GM12878 (cell line): ENCODE measurements at regions of chr14 and their contacts with region 1.

Region 1: GRCh38 chr14:63867933-63868921 is 15.4 kb downstream of the SYNE2 start:
- DNase-seq: peak; percentile 56
- ATAC-seq: peak; percentile 5
- H3K4me3 ChIP-seq: peak overlapping the region; percentile 34; the same call in 1 of the 2 replicates
- H3K27ac ChIP-seq: peak overlapping the region; percentile 69
- H3K4me1 ChIP-seq: peaks cover 57% of the 10 kb centered on the region
- H3K27me3 ChIP-seq: no peaks in the 10 kb centered on the region
- CTCF ChIP-seq: no peak
- EP300 ChIP-seq: no peak
- POLR2A ChIP-seq: no peak
- RAD21 ChIP-seq: no peak

Region 2: GRCh38 chr14:63910583-63911363 is 42.5 kb after region 1 on chr14:
- CTCF ChIA-PET with region 1: interaction called, 6 read pairs
- POLR2A ChIA-PET with region 1: interaction called, 17 read pairs
- RAD21 ChIA-PET with region 1: interaction called, 7 read pairs
- SMC1A ChIA-PET with region 1: interaction called, 26 read pairs
- in situ Hi-C with region 1: no loop called
- intact Hi-C with region 1: no loop called
- DNase-seq: no peak
- ATAC-seq: peak; percentile 53
- H3K4me3 ChIP-seq: no peak overlapping the region
- H3K27ac ChIP-seq: peak overlapping the region; percentile 56
- H3K4me1 ChIP-seq: peaks cover 17% of the 10 kb centered on the region
- H3K27me3 ChIP-seq: no peaks in the 10 kb centered on the region
- CTCF ChIP-seq: no peak
- EP300 ChIP-seq: no peak
- POLR2A ChIP-seq: no peak
- RAD21 ChIP-seq: no peak

Region 3: GRCh38 chr14:63938198-63939005 is 70.2 kb after region 1 on chr14:
- CTCF ChIA-PET with region 1: no interaction called
- POLR2A ChIA-PET with region 1: interaction called, 7 read pairs
- RAD21 ChIA-PET with region 1: interaction called, 7 read pairs
- SMC1A ChIA-PET with region 1: interaction called, 8 read pairs
- in situ Hi-C with region 1: no loop called
- intact Hi-C with region 1: loop called (anchors 2 kb)
- DNase-seq: peak; percentile 56
- ATAC-seq: peak; percentile 84
- H3K4me3 ChIP-seq: no peak overlapping the region
- H3K27ac ChIP-seq: peak overlapping the region; percentile 76
- H3K4me1 ChIP-seq: peaks cover 42% of the 10 kb centered on the region
- H3K27me3 ChIP-seq: no peaks in the 10 kb centered on the region
- CTCF ChIP-seq: no peak
- EP300 ChIP-seq: no peak
- POLR2A ChIP-seq: no peak
- RAD21 ChIP-seq: no peak

Region 4: DNA sequence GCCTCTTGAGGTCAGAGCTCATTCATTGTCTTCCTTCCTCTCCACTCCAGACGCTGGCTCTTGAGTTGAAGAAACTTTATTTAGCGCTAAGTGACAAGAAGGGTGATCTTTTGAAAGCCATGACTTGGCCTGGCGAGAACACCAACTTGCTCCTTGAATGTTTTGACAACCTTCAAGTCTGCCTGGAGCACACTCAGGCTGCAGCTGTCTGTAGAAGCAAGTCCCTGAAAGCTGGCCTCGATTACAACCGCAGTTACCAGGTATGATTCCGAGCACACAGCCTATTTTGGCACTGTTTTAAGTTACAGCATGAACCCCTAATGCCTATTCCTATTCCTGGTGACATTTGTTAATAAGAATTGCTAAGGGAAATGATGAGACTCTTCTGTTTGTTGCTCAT is 258.3 kb after region 1 on chr14:
- CTCF ChIA-PET with region 1: no interaction called
- POLR2A ChIA-PET with region 1: no interaction called
- RAD21 ChIA-PET with region 1: no interaction called
- SMC1A ChIA-PET with region 1: no interaction called
- in situ Hi-C with region 1: no loop called
- intact Hi-C with region 1: no loop called
- DNase-seq: no peak
- ATAC-seq: no peak
- H3K4me3 ChIP-seq: no peak overlapping the region
- H3K27ac ChIP-seq: no peak overlapping the region
- H3K4me1 ChIP-seq: no peaks in the 10 kb centered on the region
- H3K27me3 ChIP-seq: no peaks in the 10 kb centered on the region
- CTCF ChIP-seq: no peak
- EP300 ChIP-seq: no peak
- POLR2A ChIP-seq: no peak
- RAD21 ChIP-seq: no peak